ENCODE measurements at regions of chr18 and their contacts with region 1.

Region 1: DNA sequence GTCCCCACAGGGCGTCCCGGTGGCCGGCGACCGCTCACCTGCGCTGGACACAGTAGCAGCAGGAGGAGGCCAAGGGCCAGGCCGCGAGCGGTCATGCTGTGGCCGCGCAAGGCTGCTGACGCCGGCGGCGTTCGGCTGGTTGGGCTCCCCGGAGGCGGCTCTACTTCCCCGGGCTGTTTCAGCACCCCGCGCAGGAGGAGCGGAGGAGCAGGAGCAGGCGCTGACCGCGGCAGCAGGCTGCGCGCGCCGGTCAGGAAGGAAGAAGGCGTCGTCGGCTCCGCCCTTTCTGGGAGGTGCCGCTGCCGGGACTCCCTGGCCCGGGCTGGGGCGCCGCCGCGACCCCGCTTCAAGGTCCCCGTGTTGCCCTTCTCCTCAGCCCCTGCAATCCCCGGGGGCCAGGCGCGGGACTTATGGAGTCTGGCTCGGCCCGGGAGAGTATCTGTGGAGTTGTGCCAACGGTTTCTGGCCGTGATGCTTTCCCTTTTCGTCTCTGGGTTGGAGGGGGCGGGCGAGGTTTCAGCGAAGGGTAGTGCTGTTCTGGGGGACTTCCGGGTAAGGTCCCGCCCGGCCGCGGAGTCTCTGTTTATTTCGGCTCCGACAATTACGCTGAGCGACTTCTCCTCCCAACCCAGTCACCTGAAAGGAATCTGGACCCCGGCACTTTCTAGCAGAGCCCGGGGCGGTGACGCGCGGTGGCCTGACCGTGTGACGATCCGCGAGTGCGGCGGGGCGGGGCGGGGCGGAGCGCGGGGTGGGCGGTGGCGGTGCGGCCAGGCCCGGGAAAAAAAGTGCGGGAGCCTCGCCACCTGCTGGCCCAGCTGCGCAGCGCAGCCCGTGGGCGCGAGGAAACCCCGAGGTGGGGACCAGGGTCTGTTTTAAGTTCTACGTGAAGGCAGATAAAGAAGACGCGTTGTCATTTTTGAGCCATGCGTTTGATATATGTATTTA is at the start of gene NPC1:
- DNase-seq: peak; percentile 92
- ATAC-seq: peak; percentile 97
- H3K4me3 ChIP-seq: peak within 1 kb of the TSS; percentile 75
- H3K27ac ChIP-seq: peak within 1 kb of the TSS; percentile 96
- H3K4me1 ChIP-seq: peaks cover 2% of the 10 kb centered on the region; the same call in 1 of the 2 replicates
- H3K27me3 ChIP-seq: no peaks in the 10 kb centered on the region
- CTCF ChIP-seq: peak; percentile 80
- POLR2A ChIP-seq: peak; percentile 86
- RAD21 ChIP-seq: peak; percentile 74
- total RNA-seq, gene NPC1: 4.7 and 7.9 TPM in 2 replicates

Region 2: DNA sequence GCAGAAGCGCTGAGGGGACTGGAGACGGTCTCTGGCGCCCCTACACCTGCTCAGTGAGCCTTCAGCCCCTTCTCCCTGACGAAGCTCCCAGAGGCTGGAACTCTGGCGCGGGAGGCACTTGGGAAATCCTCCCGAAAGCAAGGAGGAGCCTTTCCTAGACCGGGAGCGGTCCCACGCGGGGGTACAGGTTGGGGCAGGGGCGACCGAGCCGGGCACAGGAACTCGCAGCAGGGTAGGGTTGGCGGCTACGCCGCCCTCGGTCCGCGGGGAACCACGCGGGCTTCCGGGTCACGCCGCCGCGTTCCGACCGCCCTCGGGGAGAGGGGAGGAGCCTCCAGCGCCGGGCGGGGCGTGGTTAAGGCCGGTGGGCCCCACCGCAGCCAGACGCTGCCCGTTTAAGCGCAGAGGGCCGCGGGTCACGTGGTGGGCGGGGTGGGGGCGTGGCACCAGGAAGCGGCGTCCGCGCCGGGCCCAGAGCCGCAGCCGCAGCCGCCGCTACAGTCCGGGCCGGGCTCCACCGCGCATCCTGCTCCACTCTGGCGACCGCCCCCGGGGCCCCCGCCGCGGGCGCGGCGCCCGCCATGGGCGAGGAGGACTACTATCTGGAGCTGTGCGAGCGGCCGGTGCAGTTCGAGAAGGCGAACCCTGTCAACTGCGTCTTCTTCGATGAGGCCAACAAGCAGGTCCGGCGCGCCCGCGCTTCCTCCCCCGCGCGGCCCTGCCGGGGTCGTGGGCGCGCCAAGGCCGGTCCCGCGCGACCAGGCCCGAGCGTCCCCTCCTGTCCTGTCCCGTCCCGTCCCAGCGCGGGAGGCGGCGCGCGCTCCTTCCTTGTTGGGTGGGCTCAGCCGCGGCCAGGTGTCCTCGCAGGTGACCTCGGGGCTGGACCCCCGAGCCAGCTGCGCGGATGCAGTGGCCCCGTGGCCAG is 83.2 kb before region 1 on chr18 and contains the start of gene RMC1:
- CTCF ChIA-PET with region 1: interaction called, 5 read pairs
- POLR2A ChIA-PET with region 1: no interaction called
- dilution Hi-C with region 1: no loop called
- in situ Hi-C with region 1: no loop called
- intact Hi-C with region 1: loop called (anchors 5 kb)
- DNase-seq: peak; percentile 90
- ATAC-seq: peak; percentile 97
- H3K4me3 ChIP-seq: peak within 1 kb of the TSS; percentile 73
- H3K27ac ChIP-seq: peak within 1 kb of the TSS; percentile 74
- H3K4me1 ChIP-seq: peaks cover 12% of the 10 kb centered on the region
- H3K27me3 ChIP-seq: no peaks in the 10 kb centered on the region
- CTCF ChIP-seq: 0 out of 2 replicates have a peak, but pooled peaks have one; percentile 6
- POLR2A ChIP-seq: peak; percentile 84
- RAD21 ChIP-seq: no peak
- total RNA-seq, gene RMC1: 13.9 and 14.2 TPM in 2 replicates

Region 3: GRCh38 chr18:23529597-23529996 is 56.9 kb before region 1 on chr18:
- CTCF ChIA-PET with region 1: no interaction called
- POLR2A ChIA-PET with region 1: interaction called, 14 read pairs
- dilution Hi-C with region 1: no loop called
- in situ Hi-C with region 1: no loop called
- intact Hi-C with region 1: no loop called
- DNase-seq: peak; percentile 62
- ATAC-seq: no peak; the same call in 1 of the 2 replicates
- H3K4me3 ChIP-seq: no peak overlapping the region
- H3K27ac ChIP-seq: no peak overlapping the region
- H3K4me1 ChIP-seq: peaks cover 2% of the 10 kb centered on the region; the same call in 1 of the 2 replicates
- H3K27me3 ChIP-seq: no peaks in the 10 kb centered on the region
- CTCF ChIP-seq: no peak
- POLR2A ChIP-seq: no peak
- RAD21 ChIP-seq: no peak

Measured in IMR-90 (cell line).